Mucosa of descending colon (tissue), 3 donors: ENCODE measurements at regions of chr12 and their contacts with region 1.

Region 1: GRCh38 chr12:6195665-6196535 is 4.3 kb upstream of the CD9 start:
- DNase-seq: peak; percentile 83 to 97 (median 91)
- ATAC-seq: peak; percentile 76
- H3K4me3 ChIP-seq: no peak overlapping the region
- H3K4me1 ChIP-seq: peaks cover 21% of the 10 kb centered on the region
- CTCF ChIP-seq: peak; percentile 84

Region 2: GRCh38 chr12:6039894-6040568 is 155.9 kb before region 1 on chr12:
- intact Hi-C with region 1: no loop called
- DNase-seq: peak in 1 of 3 donors; percentile 67
- ATAC-seq: peak; percentile 85
- H3K4me3 ChIP-seq: no peak overlapping the region
- H3K4me1 ChIP-seq: no peaks in the 10 kb centered on the region
- CTCF ChIP-seq: peak; percentile 68

Region 3: GRCh38 chr12:6140651-6141447 is 55.1 kb before region 1 on chr12:
- intact Hi-C with region 1: no loop called
- DNase-seq: peak in 1 of 3 donors; percentile 19
- ATAC-seq: peak; percentile 76
- H3K4me3 ChIP-seq: no peak overlapping the region
- H3K4me1 ChIP-seq: no peaks in the 10 kb centered on the region
- CTCF ChIP-seq: no peak

Region 4: GRCh38 chr12:6230321-6231110 is 34.6 kb after region 1 on chr12:
- intact Hi-C with region 1: loop called in 1 of 2 experiments (anchors 5 kb)
- DNase-seq: peak; percentile 71 to 82 (median 74)
- ATAC-seq: peak; percentile 3
- H3K4me3 ChIP-seq: no peak overlapping the region
- H3K4me1 ChIP-seq: peaks cover 95% of the 10 kb centered on the region
- CTCF ChIP-seq: no peak

Region 5: GRCh38 chr12:6278439-6279255 is 82.7 kb after region 1 on chr12:
- intact Hi-C with region 1: loop called (anchors 5 kb)
- DNase-seq: peak; percentile 91 to 97 (median 93)
- ATAC-seq: peak; percentile 91
- H3K4me3 ChIP-seq: no peak overlapping the region
- H3K4me1 ChIP-seq: peaks cover 26% of the 10 kb centered on the region
- CTCF ChIP-seq: peak; percentile 96